Activated CD4-positive, alpha-beta T cell treated with anti-CD3 and anti-CD28 coated beads for 36 hours (primary cell): ENCODE measurements at regions of chr16 and their contacts with region 1.

Region 1: DNA sequence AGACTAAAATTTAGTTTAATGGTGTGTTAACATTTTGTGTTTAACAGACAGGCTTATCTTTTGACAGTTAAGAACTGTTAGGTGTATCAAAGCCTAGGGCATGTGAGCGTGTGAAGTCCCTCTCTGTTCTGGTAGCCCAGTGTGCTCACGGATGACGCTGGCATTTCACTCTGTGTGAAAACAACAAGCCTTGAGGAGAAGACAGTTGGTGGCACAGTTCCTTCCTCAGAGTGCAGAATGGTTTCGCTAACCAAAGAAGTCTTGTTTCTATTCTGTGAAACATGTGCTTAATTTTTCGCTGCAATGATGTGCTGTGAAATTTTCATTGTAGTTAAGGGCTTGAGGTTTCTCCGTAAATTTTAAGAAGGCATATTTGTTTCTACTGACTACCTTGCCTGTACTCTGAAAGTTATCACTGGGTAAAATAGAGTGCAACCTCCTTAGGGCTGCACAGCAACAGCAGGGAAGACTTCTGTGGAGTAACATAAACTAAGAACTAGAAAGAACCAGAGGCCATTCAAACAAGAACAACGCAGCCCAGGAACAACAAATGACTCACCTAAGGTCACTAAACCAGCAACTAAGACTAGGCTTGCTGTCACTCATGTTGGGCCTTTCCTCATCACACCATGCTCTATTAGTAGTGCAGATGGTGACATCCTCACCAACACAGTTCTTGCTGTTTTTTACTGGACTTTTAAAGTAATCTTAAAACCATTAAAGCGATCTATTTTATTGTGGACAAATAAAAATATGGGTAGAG is 33.4 kb downstream of the BRD7 start:
- DNase-seq: peak; percentile 74
- ATAC-seq: peak; percentile 65
- H3K4me3 Mint-ChIP-seq: peak overlapping the region; percentile 41
- H3K27ac Mint-ChIP-seq: peak overlapping the region; percentile 94
- H3K4me1 Mint-ChIP-seq: peaks cover 73% of the 10 kb centered on the region
- H3K27me3 Mint-ChIP-seq: no peaks in the 10 kb centered on the region

Region 2: GRCh38 chr16:50266337-50267091 is 68.9 kb before region 1 on chr16 and contains the start of gene ADCY7:
- CTCF ChIA-PET with region 1: no interaction called
- POLR2A ChIA-PET with region 1: no interaction called
- intact Hi-C with region 1: loop called (anchors 1 to 2 kb)
- DNase-seq: peak; percentile 92
- ATAC-seq: peak; percentile 83
- H3K4me3 Mint-ChIP-seq: peak within 1 kb of the TSS; percentile 87
- H3K27ac Mint-ChIP-seq: peak within 1 kb of the TSS; percentile 98
- H3K4me1 Mint-ChIP-seq: peaks cover 70% of the 10 kb centered on the region
- H3K27me3 Mint-ChIP-seq: no peaks in the 10 kb centered on the region
- total RNA-seq, gene ADCY7: 51.8 to 85.3 TPM

Region 3: GRCh38 chr16:50273681-50274325 is 61.6 kb before region 1 on chr16:
- CTCF ChIA-PET with region 1: interaction called, 4 read pairs
- POLR2A ChIA-PET with region 1: no interaction called
- intact Hi-C with region 1: loop called (anchors 1 kb)
- DNase-seq: peak; percentile 73
- ATAC-seq: peak; percentile 37
- H3K4me3 Mint-ChIP-seq: peak overlapping the region; percentile 97
- H3K27ac Mint-ChIP-seq: peak overlapping the region; percentile 100
- H3K4me1 Mint-ChIP-seq: peaks cover 92% of the 10 kb centered on the region
- H3K27me3 Mint-ChIP-seq: no peaks in the 10 kb centered on the region

Region 4: GRCh38 chr16:50354629-50355456 is 19.5 kb after region 1 on chr16:
- CTCF ChIA-PET with region 1: interaction called, 304 read pairs
- POLR2A ChIA-PET with region 1: interaction called, 3 read pairs
- intact Hi-C with region 1: loop called in 1 of 2 experiments (anchors 1 kb)
- DNase-seq: no peak
- ATAC-seq: no peak
- H3K4me3 Mint-ChIP-seq: no peak overlapping the region
- H3K27ac Mint-ChIP-seq: no peak overlapping the region
- H3K4me1 Mint-ChIP-seq: peaks cover 34% of the 10 kb centered on the region
- H3K27me3 Mint-ChIP-seq: no peaks in the 10 kb centered on the region

Region 5: DNA sequence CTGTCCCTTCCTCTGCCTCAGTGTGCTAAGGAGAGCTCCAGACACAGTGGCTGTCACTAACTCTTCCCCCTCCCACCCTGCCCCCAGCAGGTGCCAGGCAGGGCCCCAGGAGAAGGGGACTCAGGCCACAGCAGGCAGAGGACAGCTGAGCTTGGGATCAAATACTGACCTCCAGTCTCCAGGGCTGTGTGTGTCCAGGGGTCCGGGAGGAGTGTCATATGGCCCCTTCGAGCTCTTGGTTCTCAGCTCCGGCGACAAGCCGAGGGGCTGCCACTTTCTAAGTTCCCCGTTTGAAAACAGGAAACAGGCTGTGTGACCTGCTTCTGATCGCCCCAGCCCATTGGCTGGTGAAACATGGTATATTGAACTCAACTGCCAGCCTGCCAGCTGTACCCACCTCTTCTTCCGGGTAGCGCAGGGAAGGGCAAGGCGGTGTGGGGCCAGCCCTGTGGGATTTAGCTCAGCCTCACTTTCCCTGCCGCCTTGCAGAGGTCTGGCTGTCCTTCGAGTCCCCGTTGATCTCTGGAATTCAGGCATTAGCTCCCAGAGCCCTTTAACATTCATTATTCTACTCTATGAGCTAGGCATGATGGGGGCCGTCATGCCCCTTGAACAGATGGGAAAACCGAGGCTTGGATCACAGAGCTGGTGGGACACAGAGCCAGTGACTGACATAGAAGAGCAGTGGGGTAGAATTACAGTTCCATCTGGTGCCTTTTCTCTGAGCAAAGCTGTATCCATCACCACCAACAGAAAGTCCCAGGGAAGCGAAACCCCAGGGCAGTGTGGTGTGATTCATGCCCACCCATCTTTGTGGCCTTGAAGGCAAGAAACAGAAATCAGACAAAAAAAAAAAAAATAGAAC is 345.9 kb after region 1 on chr16 and contains the start of gene SNX20:
- CTCF ChIA-PET with region 1: no interaction called
- POLR2A ChIA-PET with region 1: no interaction called
- intact Hi-C with region 1: loop called in 1 of 2 experiments (anchors 5 kb)
- DNase-seq: peak; percentile 80
- ATAC-seq: peak; percentile 69
- H3K4me3 Mint-ChIP-seq: peak within 1 kb of the TSS; percentile 78
- H3K27ac Mint-ChIP-seq: peak within 1 kb of the TSS; percentile 94
- H3K4me1 Mint-ChIP-seq: peaks cover 85% of the 10 kb centered on the region
- H3K27me3 Mint-ChIP-seq: no peaks in the 10 kb centered on the region
- total RNA-seq, gene SNX20: 43.3 to 48.9 TPM

Region 6: DNA sequence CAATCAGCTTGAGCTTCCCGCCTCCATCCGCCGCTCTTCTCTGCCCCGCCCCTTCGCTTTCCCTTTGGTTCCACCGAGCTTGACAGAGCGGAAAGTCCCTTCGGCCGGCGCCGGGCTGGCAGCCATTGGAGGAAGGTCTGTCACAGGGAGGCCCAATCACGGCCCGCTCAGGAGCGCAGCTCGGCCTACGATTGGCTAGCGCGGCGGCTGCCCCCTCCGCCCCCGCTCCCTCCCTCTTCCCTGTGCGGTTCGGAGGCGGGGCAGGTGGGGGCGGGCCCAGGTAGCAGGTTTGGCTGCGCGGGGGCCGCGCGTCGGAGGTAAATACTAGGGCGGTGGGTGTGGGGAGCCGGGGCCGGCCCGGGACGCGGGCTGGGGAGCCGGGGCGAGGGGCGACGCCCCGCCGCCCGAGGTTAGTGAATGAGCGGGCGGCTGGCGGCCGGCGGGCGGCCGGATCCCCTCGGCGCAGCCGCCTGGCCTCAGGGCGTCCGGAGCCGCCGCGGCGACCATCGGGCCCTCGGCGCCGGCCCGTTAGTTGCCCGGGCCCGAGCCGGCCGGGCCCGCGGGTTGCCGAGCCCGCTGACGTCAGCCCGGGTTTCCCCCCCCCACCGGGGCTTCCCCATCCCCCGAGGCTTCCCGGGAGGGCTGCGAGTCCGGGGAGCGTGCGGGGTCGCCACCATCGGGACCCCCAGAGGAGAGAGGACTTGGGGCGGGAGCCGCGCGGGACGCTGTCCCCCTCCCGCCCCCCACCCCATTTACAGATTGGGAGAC is 406.6 kb after region 1 on chr16 and contains the start of gene CYLD:
- CTCF ChIA-PET with region 1: no interaction called
- POLR2A ChIA-PET with region 1: no interaction called
- intact Hi-C with region 1: loop called (anchors 1 to 5 kb)
- DNase-seq: peak; percentile 100
- ATAC-seq: peak; percentile 91
- H3K4me3 Mint-ChIP-seq: peak within 1 kb of the TSS; percentile 93
- H3K27ac Mint-ChIP-seq: peak within 1 kb of the TSS; percentile 95
- H3K4me1 Mint-ChIP-seq: peaks cover 42% of the 10 kb centered on the region
- H3K27me3 Mint-ChIP-seq: no peaks in the 10 kb centered on the region
- total RNA-seq, gene CYLD: 72.4 to 92.8 TPM

Region 7: DNA sequence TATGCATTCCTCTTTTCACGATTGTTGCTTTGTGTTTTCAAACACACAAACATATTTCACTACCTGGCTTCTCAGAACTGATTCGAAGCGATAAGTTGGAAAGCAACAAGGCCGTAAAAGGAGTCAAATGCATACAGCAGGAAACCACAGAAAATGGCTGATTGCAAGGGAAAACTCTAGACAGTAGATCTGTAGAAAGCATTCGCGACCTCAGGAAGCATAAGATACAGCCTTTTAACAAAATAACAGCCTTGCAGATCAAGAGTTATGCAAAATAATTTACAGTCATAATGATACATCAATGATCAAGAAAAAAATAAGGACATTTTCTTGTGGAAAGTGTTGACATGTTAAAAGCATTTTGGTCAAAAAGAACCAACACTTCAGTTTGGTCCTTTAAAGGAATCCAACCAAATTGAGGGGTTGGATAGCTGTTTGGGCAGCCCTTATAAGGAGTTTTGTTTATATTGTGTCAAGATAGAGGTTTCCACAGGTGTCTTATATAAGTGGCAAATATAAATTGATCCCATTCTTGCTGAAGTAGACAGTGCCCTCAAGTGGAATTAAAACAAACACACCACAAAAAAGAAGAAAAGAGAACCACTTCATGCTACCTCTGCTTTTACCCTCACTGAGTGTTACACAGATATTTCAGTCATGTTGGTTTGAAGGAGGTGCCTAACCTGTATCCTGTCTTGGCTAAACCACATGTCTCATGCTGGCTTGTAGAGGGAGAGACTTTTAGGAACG is 412.0 kb after region 1 on chr16:
- CTCF ChIA-PET with region 1: no interaction called
- POLR2A ChIA-PET with region 1: no interaction called
- intact Hi-C with region 1: loop called (anchors 1 to 5 kb)
- DNase-seq: no peak
- ATAC-seq: peak; percentile 74
- H3K4me3 Mint-ChIP-seq: peak overlapping the region; percentile 68
- H3K27ac Mint-ChIP-seq: peak overlapping the region; percentile 88
- H3K4me1 Mint-ChIP-seq: peaks cover 66% of the 10 kb centered on the region
- H3K27me3 Mint-ChIP-seq: no peaks in the 10 kb centered on the region